Prostate gland (tissue), 2 donors: ENCODE measurements at regions of chr1 and their contacts with region 1.

Region 1: GRCh38 chr1:31663622-31664452 is 19.2 kb upstream of the PEF1 start:
- DNase-seq: peak; percentile 33
- H3K4me3 ChIP-seq: no peak overlapping the region
- H3K27ac ChIP-seq: no peak overlapping the region
- H3K4me1 ChIP-seq: no peaks in the 10 kb centered on the region
- H3K27me3 ChIP-seq: no peaks in the 10 kb centered on the region
- CTCF ChIP-seq: peak; percentile 82 to 96 (median 92)
- POLR2A ChIP-seq: no peak

Region 2: DNA sequence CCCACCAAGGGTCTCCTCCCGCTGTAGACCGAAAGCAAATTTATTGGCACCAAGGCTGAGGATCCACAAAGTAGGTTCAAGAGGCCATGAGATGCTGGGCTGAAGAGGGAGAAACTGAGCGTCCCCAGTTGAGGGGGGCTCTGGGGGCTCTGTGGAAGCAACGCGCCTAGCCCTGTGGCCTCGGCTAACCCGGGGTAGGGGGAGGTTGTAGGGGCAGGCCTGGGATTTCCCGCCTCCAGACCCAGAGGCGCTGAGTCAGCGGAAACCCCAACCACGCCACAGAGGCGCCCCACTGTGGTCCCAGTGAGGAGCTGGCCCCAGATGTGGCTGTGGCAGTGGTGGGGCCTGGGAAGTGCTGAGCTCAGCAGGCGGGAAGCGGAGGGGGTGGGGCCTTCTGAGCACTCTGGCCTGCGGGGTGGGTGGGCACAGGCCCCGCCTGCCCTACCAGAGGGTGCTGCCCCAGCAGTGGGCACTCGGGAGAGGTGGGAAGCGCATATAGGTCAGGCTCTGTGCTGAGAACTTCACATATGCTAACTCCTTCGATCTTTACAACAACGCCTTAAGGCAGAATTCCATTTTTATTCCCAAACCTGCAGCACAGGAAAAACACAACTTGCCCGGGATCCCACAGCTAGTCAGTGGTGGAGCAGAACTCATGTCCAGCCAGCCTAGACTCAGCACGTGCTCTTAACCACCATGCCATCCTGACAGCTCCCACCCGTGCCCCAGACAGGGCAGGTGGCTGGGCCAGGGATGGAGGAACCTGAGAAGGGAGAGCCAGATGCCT is 41.4 kb after region 1 on chr1:
- intact Hi-C with region 1: loop called (anchors 2 kb)
- DNase-seq: peak; percentile 19
- H3K4me3 ChIP-seq: no peak overlapping the region
- H3K27ac ChIP-seq: peak overlapping the region; percentile 73 to 84
- H3K4me1 ChIP-seq: peaks cover 16% of the 10 kb centered on the region
- H3K27me3 ChIP-seq: no peaks in the 10 kb centered on the region
- CTCF ChIP-seq: peak in 2 of 4 experiments; percentile 33 to 37
- POLR2A ChIP-seq: no peak